ENCODE measurements at regions of chr17 and their contacts with region 1.

Region 1: DNA sequence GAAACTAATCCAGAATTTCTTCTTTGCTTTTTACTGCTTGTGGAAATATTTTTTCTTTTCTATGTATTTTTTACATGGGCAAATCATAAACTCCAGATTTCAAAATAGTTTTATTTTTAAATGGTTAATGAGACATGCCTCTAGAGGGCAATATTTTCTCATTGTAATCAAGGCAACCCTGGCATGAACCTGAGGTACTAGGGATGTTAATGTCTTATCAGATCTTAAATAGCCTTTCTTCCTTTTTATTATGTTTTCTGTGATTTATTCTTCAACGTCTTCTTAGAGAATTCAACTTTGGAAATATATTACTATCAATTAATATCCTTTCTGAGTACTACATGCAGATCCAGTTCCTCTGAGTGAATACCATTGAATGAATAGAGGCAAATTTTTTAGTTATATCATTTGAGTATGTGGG is 324.7 kb downstream of the BCAS3 start:
- DNase-seq: peak; percentile 45
- H3K4me3 ChIP-seq: no peak overlapping the region
- H3K27ac ChIP-seq: no peak overlapping the region
- H3K4me1 ChIP-seq: no peaks in the 10 kb centered on the region
- H3K27me3 ChIP-seq: no peaks in the 10 kb centered on the region
- CTCF ChIP-seq: peak; percentile 69

Region 2: DNA sequence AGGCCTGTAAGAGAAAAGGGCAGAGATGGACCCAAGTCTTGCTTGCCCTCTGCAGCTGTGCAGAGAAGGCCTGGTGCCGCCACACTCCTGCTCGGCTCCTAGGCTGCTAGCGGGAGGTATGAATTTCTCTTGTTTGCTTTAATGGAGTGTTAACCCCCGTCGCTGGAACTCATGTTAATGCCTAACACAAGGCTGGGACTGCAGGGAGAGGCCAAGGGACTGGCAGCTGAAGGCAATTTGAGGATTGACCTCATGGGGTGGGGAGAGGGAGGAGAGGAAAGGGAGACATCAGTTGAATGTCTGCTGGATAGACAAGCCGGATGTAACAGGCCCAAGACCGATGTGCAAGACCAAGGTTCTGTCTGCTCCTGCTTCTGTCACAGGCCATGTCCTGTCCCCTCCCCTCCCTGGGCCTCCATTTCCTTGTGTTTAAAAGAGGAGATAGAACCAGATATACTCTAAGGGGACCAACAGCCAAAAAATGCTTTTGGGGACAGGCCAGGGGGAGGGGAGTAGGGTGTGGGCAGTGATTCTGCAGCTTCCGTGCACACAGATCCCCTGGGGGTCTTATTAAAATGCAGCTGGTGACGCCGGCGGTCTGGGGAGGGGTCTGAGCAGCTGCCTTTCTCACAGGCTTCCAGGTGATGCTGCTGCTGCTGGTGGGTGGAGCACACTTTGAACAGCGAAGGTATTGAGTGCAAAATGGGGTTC is 350.6 kb after region 1 on chr17:
- CTCF ChIA-PET with region 1: no interaction called
- POLR2A ChIA-PET with region 1: no interaction called
- intact Hi-C with region 1: loop called (anchors 10 kb)
- DNase-seq: no peak
- H3K4me3 ChIP-seq: no peak overlapping the region
- H3K27ac ChIP-seq: no peak overlapping the region
- H3K4me1 ChIP-seq: no peaks in the 10 kb centered on the region
- H3K27me3 ChIP-seq: no peaks in the 10 kb centered on the region
- CTCF ChIP-seq: no peak

Region 3: DNA sequence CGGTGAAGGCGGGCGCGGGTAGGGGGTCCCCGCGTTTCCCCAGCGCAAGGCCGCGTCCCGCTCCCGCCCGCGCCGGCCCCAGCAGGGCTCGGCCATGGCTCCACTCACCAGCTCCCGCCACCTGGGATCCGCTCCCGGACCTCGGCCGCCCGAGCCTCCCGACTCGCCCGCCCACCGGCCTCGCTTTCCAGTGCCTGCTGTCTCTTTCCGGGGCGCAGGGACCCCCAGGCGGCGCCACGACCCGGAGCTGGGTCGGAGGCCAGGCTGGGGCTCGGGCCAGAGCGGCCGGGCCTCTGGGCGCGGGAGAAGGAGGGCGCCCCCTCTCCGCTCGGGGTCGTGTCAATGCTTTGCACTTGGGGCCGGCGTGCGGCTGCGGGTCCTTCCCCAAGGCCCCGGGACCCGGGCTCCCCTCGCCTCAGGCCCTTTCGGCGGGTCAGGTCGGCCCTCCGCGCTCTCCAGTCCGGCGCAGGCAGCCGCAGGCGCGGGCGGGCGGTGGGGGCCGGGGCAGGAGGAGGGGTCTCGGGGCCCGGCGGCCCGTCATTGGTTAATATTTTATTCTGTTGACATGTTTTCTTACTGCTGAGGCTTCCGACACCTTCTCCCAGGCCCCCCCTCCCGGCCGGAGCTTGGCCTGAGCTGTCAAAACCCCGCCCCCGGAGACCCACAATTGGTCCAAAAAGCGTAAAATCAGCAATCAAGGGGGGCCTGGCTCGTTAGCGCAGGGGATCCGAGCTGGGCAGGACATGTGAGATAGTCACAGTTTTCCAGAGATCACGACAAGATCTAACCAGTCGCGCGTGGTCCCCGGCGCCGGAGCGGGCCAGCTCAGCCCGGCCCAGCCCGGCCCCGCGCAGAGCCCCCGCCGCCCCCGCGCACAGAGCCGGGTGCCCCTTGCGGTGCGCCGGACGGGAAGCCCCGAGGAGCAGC is 397.1 kb after region 1 on chr17 and contains the start of gene TBX2:
- CTCF ChIA-PET with region 1: no interaction called
- POLR2A ChIA-PET with region 1: no interaction called
- intact Hi-C with region 1: loop called (anchors 5 kb)
- DNase-seq: no peak
- H3K4me3 ChIP-seq: peak within 1 kb of the TSS; percentile 31
- H3K27ac ChIP-seq: no peak within 1 kb of the TSS
- H3K4me1 ChIP-seq: peaks cover 31% of the 10 kb centered on the region
- H3K27me3 ChIP-seq: peaks cover 94% of the 10 kb centered on the region
- CTCF ChIP-seq: no peak
- total RNA-seq, gene TBX2: not detected in 2 replicates